A673 (cell line): ENCODE measurements at regions of chr5 and their contacts with region 1.

Region 1: GRCh38 chr5:102778478-102778877 is 23.4 kb downstream of the PAM start:
- DNase-seq: no peak
- H3K4me3 ChIP-seq: no peak overlapping the region
- H3K27ac ChIP-seq: peak overlapping the region; percentile 7
- H3K4me1 ChIP-seq: peaks cover 37% of the 10 kb centered on the region
- H3K27me3 ChIP-seq: no peaks in the 10 kb centered on the region
- CTCF ChIP-seq: no peak

Region 2: GRCh38 chr5:102681407-102681983 is 97.0 kb before region 1 on chr5:
- CTCF ChIA-PET with region 1: no interaction called
- POLR2A ChIA-PET with region 1: no interaction called
- intact Hi-C with region 1: loop called (anchors 5 kb)
- DNase-seq: peak; percentile 90
- H3K4me3 ChIP-seq: no peak overlapping the region
- H3K27ac ChIP-seq: no peak overlapping the region
- H3K4me1 ChIP-seq: no peaks in the 10 kb centered on the region
- H3K27me3 ChIP-seq: no peaks in the 10 kb centered on the region
- CTCF ChIP-seq: peak; percentile 97

Region 3: GRCh38 chr5:103139264-103139865 is 360.9 kb after region 1 on chr5:
- CTCF ChIA-PET with region 1: no interaction called
- POLR2A ChIA-PET with region 1: no interaction called
- intact Hi-C with region 1: loop called (anchors 10 kb)
- DNase-seq: peak; percentile 82
- H3K4me3 ChIP-seq: no peak overlapping the region
- H3K27ac ChIP-seq: no peak overlapping the region
- H3K4me1 ChIP-seq: no peaks in the 10 kb centered on the region
- H3K27me3 ChIP-seq: no peaks in the 10 kb centered on the region
- CTCF ChIP-seq: peak; percentile 96